A549 (cell line): ENCODE measurements at regions of chr17 and their contacts with region 1.

Region 1: GRCh38 chr17:43994272-43995149 is 9.9 kb upstream of the NAGS start:
- DNase-seq: peak; percentile 71 to 94
- ATAC-seq: peak; percentile 90 to 96
- H3K4me3 ChIP-seq: peak overlapping the region; percentile 45
- H3K27ac ChIP-seq: peak overlapping the region; percentile 70 to 86
- H3K4me1 ChIP-seq: 0 out of 3 replicates have a peak, but pooled peaks cover 3% of the 10 kb centered on the region
- CTCF ChIP-seq: peak; percentile 96
- EP300 ChIP-seq: no peak
- POLR2A ChIP-seq: no peak
- RAD21 ChIP-seq: peak; percentile 96 to 98

Region 2: DNA sequence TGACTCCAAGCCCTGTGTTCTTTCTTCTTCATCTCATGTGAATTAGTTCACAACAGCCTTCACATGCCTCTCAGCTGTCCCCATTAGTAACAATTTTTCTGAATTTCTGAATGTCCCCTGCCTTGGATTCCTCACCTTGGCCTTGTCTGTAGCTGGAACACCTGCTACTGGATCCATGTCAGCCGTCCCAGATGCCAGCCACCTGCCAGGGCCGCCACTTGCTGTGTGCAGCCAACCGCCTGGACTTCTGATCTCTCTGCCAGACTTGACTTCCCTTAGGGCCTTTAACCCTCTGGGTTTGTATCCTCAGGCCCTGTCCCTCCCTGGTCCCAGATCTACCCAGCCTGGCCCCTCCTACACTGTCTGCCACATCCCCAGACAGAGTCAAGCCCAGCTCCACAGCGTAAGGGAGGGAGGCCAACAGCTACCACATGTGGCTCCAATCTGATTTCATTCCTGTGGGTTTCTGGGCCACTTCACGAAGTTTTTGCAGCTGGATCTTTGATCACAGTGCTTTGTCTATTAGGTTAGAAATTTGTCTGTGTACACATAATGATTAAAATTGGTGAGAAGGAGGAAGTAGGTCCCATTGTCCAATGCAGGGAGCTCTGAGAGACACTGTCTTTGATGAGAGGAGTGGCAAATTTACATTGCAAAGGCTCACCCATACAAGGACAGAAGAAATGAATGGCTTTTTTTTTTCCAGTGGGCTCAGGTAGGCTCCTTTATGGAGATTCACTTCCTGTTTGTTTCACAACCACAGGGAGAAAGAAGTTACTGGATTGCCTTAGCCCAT is 102.5 kb before region 1 on chr17:
- CTCF ChIA-PET with region 1: interaction called, 12 read pairs
- POLR2A ChIA-PET with region 1: no interaction called
- DNase-seq: no peak
- ATAC-seq: no peak
- H3K4me3 ChIP-seq: no peak overlapping the region
- H3K27ac ChIP-seq: no peak overlapping the region
- H3K4me1 ChIP-seq: no peaks in the 10 kb centered on the region
- CTCF ChIP-seq: no peak
- EP300 ChIP-seq: no peak
- POLR2A ChIP-seq: no peak
- RAD21 ChIP-seq: no peak

Region 3: DNA sequence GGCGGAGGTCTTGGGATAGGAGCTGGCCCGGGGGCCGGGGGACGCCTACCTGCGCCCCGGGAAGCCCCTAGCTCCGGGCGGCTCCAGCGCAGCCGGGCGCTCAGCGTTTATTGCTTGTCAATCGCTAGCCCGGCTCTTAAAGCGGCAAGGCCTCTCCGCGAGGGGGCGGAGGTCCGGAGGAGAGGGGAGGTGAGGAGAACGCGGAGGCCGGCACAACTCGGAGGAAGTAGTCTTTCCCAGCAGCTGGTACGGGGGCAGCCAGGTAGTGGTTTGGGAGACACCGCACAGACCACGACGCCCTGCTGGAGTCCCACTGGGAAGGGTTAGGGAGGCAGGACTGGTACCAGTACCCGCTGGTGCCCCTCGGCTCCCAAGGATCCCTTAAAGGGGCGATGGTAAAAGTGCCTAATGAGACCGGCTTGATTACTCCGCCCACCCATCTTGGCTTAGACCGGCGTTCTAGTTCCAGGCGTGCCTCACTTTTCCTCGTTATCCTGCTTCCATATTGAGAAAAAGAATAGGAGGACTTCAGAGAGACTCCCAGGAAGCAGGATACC is 87.0 kb before region 1 on chr17 and contains the start of gene MPP2:
- CTCF ChIA-PET with region 1: interaction called, 38 read pairs
- POLR2A ChIA-PET with region 1: no interaction called
- DNase-seq: peak; percentile 71 to 80
- ATAC-seq: peak; percentile 49 to 77
- H3K4me3 ChIP-seq: peak within 1 kb of the TSS; percentile 46
- H3K27ac ChIP-seq: peak within 1 kb of the TSS; percentile 23 to 74; a peak in 4 of 6 replicates
- H3K4me1 ChIP-seq: peaks cover 24% of the 10 kb centered on the region
- CTCF ChIP-seq: no peak
- EP300 ChIP-seq: no peak
- POLR2A ChIP-seq: no peak
- RAD21 ChIP-seq: no peak
- polyA plus RNA-seq, gene MPP2: 3.8 and 4.1 TPM in 2 replicates

Region 4: GRCh38 chr17:43974382-43975266 is 19.9 kb before region 1 on chr17:
- CTCF ChIA-PET with region 1: interaction called, 107 read pairs
- POLR2A ChIA-PET with region 1: no interaction called
- DNase-seq: no peak
- ATAC-seq: no peak
- H3K4me3 ChIP-seq: no peak overlapping the region
- H3K27ac ChIP-seq: no peak overlapping the region
- H3K4me1 ChIP-seq: no peaks in the 10 kb centered on the region
- CTCF ChIP-seq: no peak
- EP300 ChIP-seq: no peak
- POLR2A ChIP-seq: no peak
- RAD21 ChIP-seq: no peak

Region 5: DNA sequence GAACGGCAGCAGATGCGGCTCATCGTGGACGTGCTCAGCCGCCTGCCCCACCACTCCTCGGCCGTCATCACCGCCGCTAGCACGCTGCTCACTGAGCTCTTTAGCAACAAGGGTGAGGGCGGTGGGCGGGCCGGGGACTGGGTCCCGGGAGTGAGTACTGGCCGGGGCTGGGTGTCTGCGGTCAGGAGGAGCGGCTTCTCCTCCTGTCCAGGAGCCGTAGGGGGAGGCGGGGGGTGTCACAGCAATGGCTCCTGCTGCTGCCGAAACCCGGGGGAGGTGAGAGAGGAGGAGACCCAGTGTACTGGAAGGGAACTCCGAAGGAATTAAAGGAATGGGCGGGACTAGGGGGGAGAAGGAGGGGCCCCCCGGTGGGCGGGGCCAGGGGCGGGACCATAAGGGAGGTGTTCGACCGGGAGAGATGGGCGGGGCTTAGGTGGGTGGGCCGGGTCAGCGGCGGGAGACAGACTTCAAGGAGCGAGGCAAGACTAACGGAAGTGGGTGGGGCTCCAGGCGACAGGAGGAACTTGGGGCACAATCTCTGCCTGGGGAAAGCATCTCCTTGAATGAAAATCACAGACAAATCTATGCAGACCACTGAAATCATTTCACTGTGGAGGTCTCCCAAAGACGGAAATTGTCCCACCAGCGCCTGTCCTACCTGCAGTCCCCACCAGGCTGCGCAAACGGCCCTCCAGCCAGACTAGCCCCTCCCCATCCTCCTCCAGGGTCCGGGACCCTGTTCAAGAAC is 12.3 kb after region 1 on chr17:
- CTCF ChIA-PET with region 1: interaction called, 49 read pairs
- POLR2A ChIA-PET with region 1: no interaction called
- DNase-seq: peak; percentile 97
- ATAC-seq: peak; percentile 78 to 90
- H3K4me3 ChIP-seq: peak overlapping the region; percentile 51
- H3K27ac ChIP-seq: peak overlapping the region; percentile 67 to 83
- H3K4me1 ChIP-seq: peaks cover 18% of the 10 kb centered on the region
- CTCF ChIP-seq: peak; percentile 37; the same call in 2 of the 3 replicates
- EP300 ChIP-seq: no peak
- POLR2A ChIP-seq: peak; percentile 23
- RAD21 ChIP-seq: peak in 1 of 2 experiments; percentile 33; a peak in 3 of 5 replicates

Region 6: GRCh38 chr17:44024271-44024663 is 29.8 kb after region 1 on chr17:
- CTCF ChIA-PET with region 1: no interaction called
- POLR2A ChIA-PET with region 1: no interaction called
- DNase-seq: no peak
- ATAC-seq: peak in 1 of 2 experiments; percentile 17; a peak in 3 of 6 replicates
- H3K4me3 ChIP-seq: no peak overlapping the region
- H3K27ac ChIP-seq: no peak overlapping the region
- H3K4me1 ChIP-seq: no peaks in the 10 kb centered on the region
- CTCF ChIP-seq: no peak
- EP300 ChIP-seq: no peak
- POLR2A ChIP-seq: no peak
- RAD21 ChIP-seq: no peak